Heart right ventricle (tissue), 16 donors: ENCODE measurements at regions of chr15 and their contacts with region 1.

Region 1: DNA sequence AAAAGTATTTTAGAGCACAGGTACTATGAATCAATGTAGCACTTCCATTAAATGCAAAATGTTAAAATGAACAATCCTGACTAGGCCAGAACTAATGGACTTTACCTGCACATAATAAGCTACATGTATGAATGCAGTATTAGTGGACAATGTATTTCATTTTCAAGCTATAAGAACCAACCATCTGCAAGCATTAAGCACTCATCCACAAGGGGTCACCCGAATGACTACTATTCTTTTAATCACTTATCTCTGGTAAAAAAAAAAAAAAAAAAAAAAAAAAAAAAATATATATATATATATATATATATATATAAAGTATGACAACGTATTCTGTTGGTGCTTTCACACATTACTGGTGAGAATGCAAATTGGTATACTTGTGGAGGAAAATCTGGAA is 7.2 kb downstream of the HERC1 start:
- DNase-seq: no peak
- ATAC-seq: no peak
- H3K4me3 ChIP-seq: no peak overlapping the region
- H3K27ac ChIP-seq: no peak overlapping the region
- H3K4me1 ChIP-seq: peaks cover 2 to 74% (median 32%) of the 10 kb centered on the region in 9 donors
- H3K27me3 ChIP-seq: no peaks in the 10 kb centered on the region
- CTCF ChIP-seq: peak in 5 of 9 donors; percentile 19 to 43 (median 34)

Region 2: DNA sequence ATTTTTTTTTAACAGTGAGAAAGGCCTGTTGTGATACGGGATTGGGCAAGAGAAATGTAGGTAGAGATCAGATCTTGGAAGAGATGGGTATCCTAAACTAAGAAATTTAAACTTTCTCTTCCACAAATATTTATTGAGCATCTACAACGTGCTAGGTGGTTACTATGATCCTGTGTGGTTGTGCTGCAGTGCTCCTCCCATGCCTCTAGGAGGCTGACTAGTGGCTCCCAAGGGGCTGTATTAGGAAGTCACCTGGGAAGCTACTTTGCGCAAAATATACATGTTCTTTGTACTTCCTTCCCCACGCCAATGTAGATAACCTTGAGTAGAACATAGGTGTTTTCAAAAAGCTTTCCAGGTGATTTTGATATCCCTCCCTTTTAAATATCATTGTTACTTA is 294.9 kb before region 1 on chr15:
- intact Hi-C with region 1: no loop called
- DNase-seq: no peak
- ATAC-seq: no peak
- H3K4me3 ChIP-seq: no peak overlapping the region
- H3K27ac ChIP-seq: no peak overlapping the region
- H3K4me1 ChIP-seq: peaks cover 0 to 56% (median 11%) of the 10 kb centered on the region in 9 donors
- H3K27me3 ChIP-seq: no peaks in the 10 kb centered on the region
- CTCF ChIP-seq: peak in 2 of 9 donors; percentile 9 to 25

Region 3: GRCh38 chr15:63638839-63639238 is 187.7 kb before region 1 on chr15:
- intact Hi-C with region 1: no loop called
- DNase-seq: no peak
- ATAC-seq: no peak
- H3K4me3 ChIP-seq: no peak overlapping the region
- H3K27ac ChIP-seq: no peak overlapping the region
- H3K4me1 ChIP-seq: peaks cover 0 to 4% (median 0%) of the 10 kb centered on the region in 9 donors
- H3K27me3 ChIP-seq: no peaks in the 10 kb centered on the region
- CTCF ChIP-seq: no peak

Region 4: DNA sequence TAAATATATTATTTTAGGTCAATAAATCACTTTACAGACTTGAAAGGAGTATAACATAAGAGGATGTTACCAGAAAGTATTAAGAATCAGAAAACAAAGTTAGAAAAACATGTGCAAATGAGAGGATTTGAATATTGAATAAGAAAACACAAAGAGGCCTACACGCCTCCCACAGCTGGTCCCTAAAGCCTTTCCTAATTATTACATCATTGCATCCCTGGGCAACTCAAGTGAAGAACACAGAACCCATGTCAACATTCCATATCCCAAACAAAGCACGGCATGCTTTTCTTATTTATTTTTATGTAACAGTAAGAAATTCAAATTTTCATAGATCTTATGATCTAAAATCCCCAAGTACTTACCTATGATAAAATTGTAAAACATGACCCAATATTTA is 54.0 kb before region 1 on chr15:
- intact Hi-C with region 1: loop called in 1 of 10 experiments (anchors 10 kb)
- DNase-seq: no peak
- ATAC-seq: no peak
- H3K4me3 ChIP-seq: no peak overlapping the region
- H3K27ac ChIP-seq: no peak overlapping the region
- H3K4me1 ChIP-seq: peaks cover 0 to 22% (median 11%) of the 10 kb centered on the region in 9 donors
- H3K27me3 ChIP-seq: no peaks in the 10 kb centered on the region
- CTCF ChIP-seq: no peak